Activated CD8-positive, alpha-beta memory T cell treated with anti-CD3 and anti-CD28 coated beads, Interleukin-2, amount 10 ng/mL, durations not matched to agents 7 days and 5 days (primary cell): ENCODE measurements at regions of chr14 and their contacts with region 1.

Region 1: DNA sequence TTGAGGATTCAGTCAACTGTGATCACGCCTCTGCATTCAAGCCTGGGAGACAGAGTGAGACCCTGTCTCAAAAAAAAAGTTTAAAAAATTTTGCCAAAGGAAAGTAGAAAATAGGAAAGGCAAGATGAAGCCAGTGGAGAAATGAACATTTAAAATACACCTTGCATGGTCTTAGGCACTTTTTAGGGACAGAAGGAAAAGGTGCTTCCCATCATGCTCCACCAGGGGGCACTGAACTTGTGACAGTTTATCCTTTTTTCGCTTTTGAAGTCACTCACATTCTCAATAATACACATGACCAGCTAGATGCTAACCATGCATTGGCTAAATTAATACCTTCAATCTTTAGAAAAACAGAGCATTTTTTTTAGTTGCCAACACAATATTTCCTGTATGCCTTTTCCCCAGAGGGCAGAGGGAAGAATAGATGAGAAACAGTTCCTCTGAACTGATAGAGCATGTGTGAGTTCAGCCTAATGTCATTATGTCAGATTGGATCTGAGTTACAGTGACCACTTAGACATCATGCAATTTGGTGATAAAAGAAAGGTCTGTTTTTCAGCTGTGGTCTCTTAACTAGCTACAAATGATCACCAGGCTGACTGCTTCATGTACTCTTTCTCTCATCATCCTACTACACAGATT is 221.8 kb upstream of the SSTR1 start:
- DNase-seq: peak; percentile 52
- ATAC-seq: no peak
- H3K4me3 Mint-ChIP-seq: no peak overlapping the region
- H3K27ac Mint-ChIP-seq: no peak overlapping the region
- H3K4me1 Mint-ChIP-seq: no peaks in the 10 kb centered on the region
- H3K27me3 Mint-ChIP-seq: no peaks in the 10 kb centered on the region

Region 2: GRCh38 chr14:38197001-38197783 is 211.2 kb after region 1 on chr14:
- CTCF ChIA-PET with region 1: interaction called, 10 read pairs
- DNase-seq: no peak
- ATAC-seq: no peak
- H3K4me3 Mint-ChIP-seq: no peak overlapping the region
- H3K27ac Mint-ChIP-seq: no peak overlapping the region
- H3K4me1 Mint-ChIP-seq: no peaks in the 10 kb centered on the region
- H3K27me3 Mint-ChIP-seq: no peaks in the 10 kb centered on the region